Gastrocnemius medialis (tissue), 4 donors: ENCODE measurements at regions of chr2 and their contacts with region 1.

Region 1: GRCh38 chr2:241617431-241618154 is 19.4 kb downstream of the THAP4 start:
- DNase-seq: no peak
- ATAC-seq: peak; percentile 59 to 81
- H3K4me3 ChIP-seq: peak overlapping the region; percentile 44 to 55 (median 49)
- H3K27ac ChIP-seq: peak overlapping the region; percentile 24 to 75 (median 74)
- H3K4me1 ChIP-seq: peaks cover 14 to 22% of the 10 kb centered on the region in 2 donors
- H3K27me3 ChIP-seq: no peaks in the 10 kb centered on the region
- CTCF ChIP-seq: no peak
- POLR2A ChIP-seq: no peak

Region 2: GRCh38 chr2:241465543-241465942 is 152.1 kb before region 1 on chr2:
- in situ Hi-C with region 1: no loop called
- intact Hi-C with region 1: no loop called
- DNase-seq: no peak
- ATAC-seq: no peak
- H3K4me3 ChIP-seq: no peak overlapping the region
- H3K27ac ChIP-seq: no peak overlapping the region
- H3K4me1 ChIP-seq: no peaks in the 10 kb centered on the region
- H3K27me3 ChIP-seq: no peaks in the 10 kb centered on the region
- CTCF ChIP-seq: no peak
- POLR2A ChIP-seq: no peak

Region 3: GRCh38 chr2:241637000-241637791 is 19.6 kb after region 1 on chr2 and contains the starts of genes ATG4B and THAP4:
- in situ Hi-C with region 1: no loop called
- intact Hi-C with region 1: loop called (anchors 2 kb)
- DNase-seq: peak; percentile 70 to 81
- ATAC-seq: peak; percentile 90 to 91
- H3K4me3 ChIP-seq: peak within 1 kb of the TSS; percentile 73 to 95 (median 92)
- H3K27ac ChIP-seq: peak within 1 kb of the TSS; percentile 92 to 100 (median 98)
- H3K4me1 ChIP-seq: peaks cover 36 to 49% of the 10 kb centered on the region in 2 donors
- H3K27me3 ChIP-seq: no peaks in the 10 kb centered on the region
- CTCF ChIP-seq: peak in 1 of 5 experiments; percentile 51
- POLR2A ChIP-seq: peak; percentile 65 to 74
- total RNA-seq, gene ATG4B: 32.0 to 57.5 (median 49.8) TPM
- total RNA-seq, gene THAP4: 71.3 to 83.3 (median 79.9) TPM

Region 4: DNA sequence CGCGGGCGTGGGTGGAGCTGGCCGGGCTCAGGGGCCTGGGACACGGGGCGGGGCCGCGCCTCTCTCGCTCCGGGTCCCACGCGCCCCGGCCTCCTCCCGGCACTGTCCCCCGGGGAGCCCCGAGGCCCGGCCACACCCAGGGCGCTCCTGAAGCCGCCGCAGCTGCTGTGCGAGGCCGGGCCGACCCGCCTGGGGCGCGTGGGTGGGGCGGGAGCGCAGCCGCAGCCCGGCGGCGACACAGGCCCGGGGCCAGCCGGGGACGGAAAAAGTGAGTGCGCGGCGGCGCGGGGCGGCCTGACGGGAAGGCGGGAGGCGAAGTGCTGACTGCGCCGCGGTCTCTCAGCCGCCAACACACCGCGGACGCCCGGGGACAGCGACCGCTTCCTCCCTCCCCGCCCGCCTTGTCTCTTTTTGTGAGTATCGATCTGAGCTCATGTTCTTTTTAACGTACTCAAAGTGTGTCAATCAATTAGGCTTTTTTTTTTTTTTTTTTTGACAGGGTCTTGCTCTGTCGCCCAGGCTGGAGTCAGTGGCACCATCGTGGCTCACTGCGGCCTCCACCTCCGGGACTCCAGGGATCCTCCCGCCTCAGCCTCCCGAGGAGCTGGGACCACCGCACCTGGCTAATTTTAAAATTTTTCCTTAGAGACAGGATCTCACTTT is 226.6 kb after region 1 on chr2:
- in situ Hi-C with region 1: no loop called
- intact Hi-C with region 1: no loop called
- DNase-seq: peak; percentile 25 to 59
- ATAC-seq: peak; percentile 62 to 81
- H3K4me3 ChIP-seq: peak overlapping the region; percentile 42 to 56 (median 46)
- H3K27ac ChIP-seq: peak overlapping the region in 3 of 4 donors; percentile 35 to 44 (median 35)
- H3K4me1 ChIP-seq: no peaks in the 10 kb centered on the region
- H3K27me3 ChIP-seq: peaks cover 0 to 4% (median 3%) of the 10 kb centered on the region in 3 donors
- CTCF ChIP-seq: peak in 1 of 5 experiments; percentile 19
- POLR2A ChIP-seq: no peak